Heart left ventricle (tissue), 16 donors: ENCODE measurements at regions of chr7 and their contacts with region 1.

Region 1: DNA sequence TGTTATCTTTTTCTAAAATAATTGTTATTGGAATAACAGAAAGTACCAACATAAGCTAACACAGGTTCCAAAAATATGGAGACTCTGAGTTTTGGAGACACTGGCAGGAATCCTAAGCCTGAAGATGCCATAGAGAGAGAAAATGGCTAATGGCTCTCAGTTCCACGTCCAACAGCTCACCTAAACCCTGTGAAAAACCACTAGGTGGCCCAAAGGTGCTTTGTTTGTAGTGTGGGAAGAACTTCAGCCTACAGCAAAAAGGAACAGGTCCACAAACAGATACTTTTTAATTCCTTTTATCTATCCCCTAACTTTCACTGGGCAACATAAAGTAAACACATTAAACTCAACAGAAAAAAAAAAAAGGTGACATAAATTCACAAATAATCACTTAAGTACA is 272.3 kb downstream of the SEMA3D start:
- DNase-seq: no peak
- ATAC-seq: no peak
- H3K4me3 ChIP-seq: no peak overlapping the region
- H3K27ac ChIP-seq: no peak overlapping the region
- H3K4me1 ChIP-seq: no peaks in the 10 kb centered on the region
- H3K27me3 ChIP-seq: no peaks in the 10 kb centered on the region
- CTCF ChIP-seq: peak in 2 of 12 donors; percentile 3 to 25
- POLR2A ChIP-seq: no peak

Region 2: GRCh38 chr7:84876061-84876821 is 38.4 kb before region 1 on chr7:
- intact Hi-C with region 1: no loop called
- DNase-seq: no peak
- ATAC-seq: no peak
- H3K4me3 ChIP-seq: no peak overlapping the region
- H3K27ac ChIP-seq: no peak overlapping the region
- H3K4me1 ChIP-seq: no peaks in the 10 kb centered on the region
- H3K27me3 ChIP-seq: no peaks in the 10 kb centered on the region
- CTCF ChIP-seq: no peak
- POLR2A ChIP-seq: no peak

Region 3: GRCh38 chr7:85023045-85023712 is 108.6 kb after region 1 on chr7:
- intact Hi-C with region 1: loop called in 3 of 10 experiments (anchors 5 to 10 kb)
- DNase-seq: peak in 1 of 5 donors; percentile 20
- ATAC-seq: no peak
- H3K4me3 ChIP-seq: no peak overlapping the region
- H3K27ac ChIP-seq: no peak overlapping the region
- H3K4me1 ChIP-seq: peaks cover 0 to 5% (median 0%) of the 10 kb centered on the region in 12 donors
- H3K27me3 ChIP-seq: no peaks in the 10 kb centered on the region
- CTCF ChIP-seq: peak; percentile 57 to 80 (median 70)
- POLR2A ChIP-seq: no peak